ENCODE measurements at regions of chr10 and their contacts with region 1.

Region 1: DNA sequence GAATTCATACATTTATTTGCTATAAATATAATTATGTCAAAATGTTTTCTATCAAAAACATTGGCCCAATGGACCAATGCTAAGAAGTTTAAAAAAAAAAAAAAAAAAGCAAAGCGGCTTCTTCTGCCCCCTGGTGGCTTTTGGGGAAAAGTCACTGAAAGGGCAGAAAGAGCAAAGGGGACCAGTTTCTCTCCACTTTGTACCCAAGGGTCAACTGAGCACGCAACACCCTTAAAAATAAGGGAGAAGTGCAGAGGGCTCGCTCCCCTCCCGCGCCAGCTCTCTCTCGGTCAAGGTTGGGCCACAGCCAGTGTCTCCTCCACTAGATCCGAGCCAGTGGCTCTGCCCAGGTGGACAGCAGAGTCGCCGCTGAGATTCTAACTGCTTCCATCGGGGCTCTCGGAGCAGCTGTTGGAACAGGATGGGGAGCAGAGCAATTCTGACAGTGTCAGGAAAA is 136.4 kb upstream of the FGFR2 start:
- DNase-seq: peak; percentile 12 to 33 (median 28)
- ATAC-seq: peak; percentile 35
- H3K4me3 ChIP-seq: no peak overlapping the region
- H3K27ac ChIP-seq: no peak overlapping the region
- H3K4me1 ChIP-seq: peaks cover 4% of the 10 kb centered on the region
- H3K27me3 ChIP-seq: no peaks in the 10 kb centered on the region
- CTCF ChIP-seq: peak; percentile 29 to 67 (median 55)
- POLR2A ChIP-seq: no peak

Region 2: GRCh38 chr10:120942806-120943413 is 791.7 kb before region 1 on chr10:
- intact Hi-C with region 1: loop called (anchors 5 kb)
- DNase-seq: peak; percentile 75 to 81 (median 78)
- ATAC-seq: peak; percentile 78
- H3K4me3 ChIP-seq: no peak overlapping the region
- H3K27ac ChIP-seq: no peak overlapping the region
- H3K4me1 ChIP-seq: peaks cover 10% of the 10 kb centered on the region
- H3K27me3 ChIP-seq: no peaks in the 10 kb centered on the region
- CTCF ChIP-seq: peak; percentile 73 to 92 (median 90)
- POLR2A ChIP-seq: no peak

Measured in body of pancreas (tissue), 4 donors.